Lower leg skin (tissue), 4 donors: ENCODE measurements at regions of chr9 and their contacts with region 1.

Region 1: GRCh38 chr9:120985810-120986222 is 59.2 kb upstream of the TRAF1 start:
- DNase-seq: no peak
- H3K4me3 ChIP-seq: no peak overlapping the region
- CTCF ChIP-seq: no peak
- POLR2A ChIP-seq: no peak

Region 2: GRCh38 chr9:121074635-121075385 is 89.0 kb after region 1 on chr9 and contains the start of gene CNTRL:
- intact Hi-C with region 1: loop called (anchors 10 kb)
- DNase-seq: peak; percentile 87 to 98
- H3K4me3 ChIP-seq: peak within 1 kb of the TSS; percentile 65
- CTCF ChIP-seq: no peak
- POLR2A ChIP-seq: no peak
- total RNA-seq, gene CNTRL: 7.7 to 11.4 (median 9.0) TPM